Dorsolateral prefrontal cortex (tissue), 120 donors: ENCODE measurements at regions of chr16 and their contacts with region 1.

Region 1: GRCh38 chr16:15434425-15435215 is at the start of gene BMERB1:
- DNase-seq: peak; percentile 70 to 90 (median 78)
- H3K4me3 ChIP-seq: peak within 1 kb of the TSS; percentile 68 to 97 (median 87)
- H3K27ac ChIP-seq: peak within 1 kb of the TSS; percentile 24 to 96 (median 88)
- H3K27me3 ChIP-seq: no peaks in the 10 kb centered on the region
- CTCF ChIP-seq: peak in 26 of 56 donors; percentile 4 to 45 (median 21)
- total RNA-seq, gene BMERB1: 133 to 426 (median 283) TPM

Region 2: GRCh38 chr16:15523092-15523541 is 88.5 kb after region 1 on chr16:
- intact Hi-C with region 1: loop called in 1 of 2 experiments (anchors 10 kb)
- DNase-seq: peak; percentile 11 to 73 (median 58)
- H3K4me3 ChIP-seq: peak overlapping the region in 1 of 59 donors; percentile 3
- H3K27ac ChIP-seq: peak overlapping the region in 45 of 59 donors; percentile 2 to 80 (median 43)
- H3K27me3 ChIP-seq: no peaks in the 10 kb centered on the region
- CTCF ChIP-seq: peak in 54 of 56 donors; percentile 23 to 78 (median 54)

Region 3: DNA sequence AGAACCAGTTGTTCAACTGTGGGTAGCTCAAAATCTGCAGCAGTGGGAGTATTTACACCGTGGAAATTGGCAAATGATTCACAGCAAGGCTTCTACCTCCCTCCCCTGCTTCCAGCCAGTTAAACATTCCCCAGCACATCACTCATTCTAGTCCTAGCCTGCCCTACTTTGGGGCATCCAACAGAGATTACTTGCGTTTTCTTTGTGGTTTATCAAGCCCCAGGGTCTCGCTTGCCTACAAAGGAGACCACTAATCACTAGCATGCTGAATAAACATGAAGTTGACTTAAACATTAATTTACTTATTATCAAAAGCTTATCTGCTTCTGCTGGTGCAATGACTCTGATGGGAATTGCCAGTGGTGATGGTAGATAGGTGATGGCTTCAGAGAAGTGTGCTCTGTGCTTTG is 113.9 kb after region 1 on chr16:
- intact Hi-C with region 1: loop called (anchors 2 to 10 kb)
- DNase-seq: no peak
- H3K4me3 ChIP-seq: no peak overlapping the region
- H3K27ac ChIP-seq: peak overlapping the region in 6 of 59 donors; percentile 2 to 56 (median 23)
- H3K27me3 ChIP-seq: no peaks in the 10 kb centered on the region
- CTCF ChIP-seq: no peak

Region 4: GRCh38 chr16:15553313-15554088 is 118.9 kb after region 1 on chr16:
- intact Hi-C with region 1: loop called (anchors 2 to 10 kb)
- DNase-seq: no peak
- H3K4me3 ChIP-seq: no peak overlapping the region
- H3K27ac ChIP-seq: peak overlapping the region in 17 of 59 donors; percentile 10 to 96 (median 81)
- H3K27me3 ChIP-seq: no peaks in the 10 kb centered on the region
- CTCF ChIP-seq: no peak